ENCODE measurements at regions of chr1 and their contacts with region 1.

Region 1: DNA sequence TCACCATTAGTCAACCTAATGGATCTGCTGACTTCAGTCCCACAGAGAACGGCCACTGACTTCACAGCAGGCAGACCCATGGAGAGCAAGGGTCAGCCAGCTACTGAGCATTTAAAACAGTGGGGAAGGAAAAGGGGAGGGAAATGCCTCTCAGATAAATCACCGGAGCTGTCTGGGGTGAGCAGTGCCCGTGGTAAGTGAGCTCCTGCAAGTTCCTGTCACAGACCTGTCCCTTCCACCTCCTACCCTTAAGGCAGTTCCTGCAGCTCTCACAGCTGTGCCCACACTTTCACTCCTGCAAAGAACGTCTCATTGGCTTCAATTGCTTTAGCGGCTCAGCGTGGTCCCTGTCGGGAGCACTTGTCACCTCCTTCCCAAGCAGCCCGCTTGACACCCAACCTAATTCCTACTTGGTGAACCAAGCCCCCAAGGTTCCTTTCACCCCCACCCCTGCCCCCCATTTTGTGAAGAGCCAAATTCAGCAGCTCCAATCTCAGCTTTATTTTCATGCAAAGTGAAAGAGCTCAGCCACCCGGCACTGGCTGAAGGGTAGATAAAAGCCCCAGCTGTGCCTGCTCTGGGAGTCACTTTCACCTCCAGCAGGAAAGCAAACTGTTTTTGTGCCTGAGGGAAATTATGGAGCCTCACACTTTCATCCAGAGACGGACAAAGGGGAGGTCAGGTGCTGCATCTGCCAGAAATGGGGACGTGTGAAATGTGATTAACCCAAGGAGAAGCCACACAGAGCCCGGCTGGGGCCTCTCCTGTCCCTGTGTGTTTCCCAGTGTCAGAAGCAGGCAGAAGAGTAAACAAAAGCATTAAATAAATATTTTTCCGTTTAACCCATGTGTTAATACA is 306.2 kb downstream of the TTLL7 start:
- DNase-seq: no peak

Region 2: GRCh38 chr1:83554174-83554573 is 138.6 kb before region 1 on chr1:
- intact Hi-C with region 1: loop called (anchors 10 kb)
- DNase-seq: no peak

Region 3: DNA sequence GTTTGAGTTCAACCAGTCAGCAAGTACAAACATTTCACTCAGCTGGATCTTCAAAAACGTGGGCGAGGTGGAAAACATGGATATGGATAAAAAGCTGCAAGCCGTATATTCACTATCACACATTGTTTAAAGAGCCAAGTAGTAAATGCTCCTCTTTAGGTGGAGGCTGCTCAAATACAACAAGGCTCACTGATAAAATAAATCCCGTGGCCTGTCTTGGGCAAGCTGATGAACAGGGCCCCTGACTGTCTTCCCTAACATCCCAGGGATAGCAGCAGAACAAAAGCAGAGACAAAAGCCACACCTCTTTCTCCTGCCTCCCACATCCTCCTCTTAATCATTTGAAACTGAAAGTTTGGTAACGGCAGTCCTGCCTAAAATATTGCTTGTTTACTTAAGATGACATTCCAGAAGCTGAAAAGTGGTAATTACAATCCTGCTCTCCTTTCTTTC is 51.5 kb before region 1 on chr1:
- intact Hi-C with region 1: no loop called
- DNase-seq: no peak

Region 4: GRCh38 chr1:83818916-83819315 is 126.2 kb after region 1 on chr1:
- intact Hi-C with region 1: no loop called
- DNase-seq: no peak

Region 5: DNA sequence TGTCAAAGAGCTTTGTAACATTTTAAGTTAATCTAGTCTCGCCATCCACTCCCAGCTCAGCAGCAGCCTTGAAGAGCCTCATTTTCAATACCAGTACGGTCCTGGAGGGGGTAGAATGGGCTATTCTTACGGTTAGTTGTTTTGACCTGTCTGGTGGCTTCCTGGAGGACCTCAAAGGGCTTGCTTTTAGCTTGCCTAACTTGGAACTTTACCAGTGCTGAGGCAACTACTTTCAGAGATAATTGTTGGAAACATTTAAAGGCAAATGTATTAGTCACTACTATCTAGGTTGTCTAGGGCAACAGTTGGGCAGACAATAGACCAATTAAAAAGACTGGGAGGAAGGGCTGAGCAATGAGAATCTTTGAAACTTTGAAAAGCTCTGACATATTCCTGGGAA is 250.2 kb after region 1 on chr1:
- intact Hi-C with region 1: no loop called
- DNase-seq: no peak

Region 6: GRCh38 chr1:85116856-85117255 is 1424.1 kb after region 1 on chr1:
- intact Hi-C with region 1: no loop called
- DNase-seq: no peak

Measured in cardiac septum (tissue), 1 donor.